GM10248 (cell line): ENCODE measurements at regions of chr5 and their contacts with region 1.

Region 1: GRCh38 chr5:157948738-157949410 is 89.9 kb upstream of the CLINT1 start:
- DNase-seq: peak; percentile 77
- CTCF ChIP-seq: peak; percentile 95

Region 2: DNA sequence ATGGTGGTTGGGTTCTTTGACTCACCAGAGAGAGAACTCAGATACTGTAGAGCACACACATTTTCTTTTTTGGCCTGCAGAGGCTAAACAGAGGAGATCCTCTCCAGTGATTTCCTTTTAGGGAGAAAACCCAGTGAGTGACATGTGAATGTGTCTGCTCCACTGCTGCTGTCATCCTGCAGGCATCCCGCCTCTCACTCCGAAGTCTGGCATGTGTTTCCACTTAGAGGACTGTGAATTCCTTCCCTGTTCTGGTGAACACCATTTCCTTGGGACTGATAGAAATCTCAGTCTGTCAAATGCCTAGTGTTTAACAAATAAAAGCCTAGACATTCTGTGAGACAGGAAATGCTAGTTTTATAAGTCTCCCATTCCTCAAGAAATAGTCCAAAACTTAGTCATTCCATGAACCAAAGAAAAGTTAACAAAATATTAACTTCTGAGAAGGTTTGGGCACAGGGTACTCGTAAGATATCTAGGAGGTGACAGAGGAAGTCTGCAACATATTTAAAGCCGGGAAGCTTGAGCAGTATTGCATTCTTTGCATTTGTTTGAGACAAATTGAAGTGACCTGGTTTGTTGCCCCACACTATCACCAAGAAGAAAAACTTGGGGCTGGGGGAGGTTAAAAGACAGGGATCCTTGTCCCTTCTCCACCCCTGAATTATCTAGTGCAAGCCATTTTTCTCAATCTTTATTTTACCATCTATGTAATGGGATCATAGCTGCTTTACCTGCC is 563.7 kb before region 1 on chr5:
- CTCF ChIA-PET with region 1: no interaction called
- POLR2A ChIA-PET with region 1: no interaction called
- DNase-seq: no peak
- CTCF ChIP-seq: no peak

Region 3: GRCh38 chr5:157761690-157762621 is 186.9 kb before region 1 on chr5:
- CTCF ChIA-PET with region 1: interaction called, 49 read pairs
- POLR2A ChIA-PET with region 1: no interaction called
- DNase-seq: peak; percentile 66
- CTCF ChIP-seq: peak; percentile 75

Region 4: DNA sequence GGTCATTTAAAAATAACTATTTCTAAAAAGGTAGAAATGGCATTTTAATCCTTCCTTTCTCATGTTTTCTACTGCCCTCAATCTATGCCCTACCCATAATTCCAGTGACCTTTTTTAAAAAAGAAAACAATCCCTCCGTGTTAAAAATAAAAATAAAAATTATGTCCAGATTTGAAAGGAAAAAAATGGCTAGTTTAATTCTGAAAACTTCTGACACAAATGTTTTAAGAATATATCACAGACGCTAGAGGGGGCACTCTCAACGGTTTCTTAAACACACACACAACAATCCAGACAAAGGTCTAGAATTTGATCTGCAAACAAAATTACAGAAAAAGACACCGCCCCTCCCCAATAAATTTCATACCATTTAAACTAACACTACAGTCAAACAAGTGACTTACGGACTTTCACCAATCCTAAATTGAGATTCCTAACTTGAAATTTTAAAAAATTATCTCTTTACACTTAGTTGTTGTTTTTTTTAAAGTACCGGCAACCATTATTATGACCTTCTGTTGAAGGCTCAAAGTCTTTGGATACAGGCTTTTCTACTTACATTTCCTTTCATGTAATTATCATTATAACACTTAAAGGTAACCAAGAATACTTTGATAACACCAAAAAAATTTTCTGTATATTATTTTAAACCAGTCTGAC is 128.2 kb before region 1 on chr5:
- CTCF ChIA-PET with region 1: interaction called, 91 read pairs
- POLR2A ChIA-PET with region 1: no interaction called
- DNase-seq: peak; percentile 26
- CTCF ChIP-seq: peak; percentile 57

Region 5: GRCh38 chr5:157858527-157859226 is 90.2 kb before region 1 on chr5 and contains the start of gene CLINT1:
- CTCF ChIA-PET with region 1: interaction called, 19 read pairs
- POLR2A ChIA-PET with region 1: no interaction called
- DNase-seq: peak; percentile 88
- CTCF ChIP-seq: peak; percentile 9

Region 6: DNA sequence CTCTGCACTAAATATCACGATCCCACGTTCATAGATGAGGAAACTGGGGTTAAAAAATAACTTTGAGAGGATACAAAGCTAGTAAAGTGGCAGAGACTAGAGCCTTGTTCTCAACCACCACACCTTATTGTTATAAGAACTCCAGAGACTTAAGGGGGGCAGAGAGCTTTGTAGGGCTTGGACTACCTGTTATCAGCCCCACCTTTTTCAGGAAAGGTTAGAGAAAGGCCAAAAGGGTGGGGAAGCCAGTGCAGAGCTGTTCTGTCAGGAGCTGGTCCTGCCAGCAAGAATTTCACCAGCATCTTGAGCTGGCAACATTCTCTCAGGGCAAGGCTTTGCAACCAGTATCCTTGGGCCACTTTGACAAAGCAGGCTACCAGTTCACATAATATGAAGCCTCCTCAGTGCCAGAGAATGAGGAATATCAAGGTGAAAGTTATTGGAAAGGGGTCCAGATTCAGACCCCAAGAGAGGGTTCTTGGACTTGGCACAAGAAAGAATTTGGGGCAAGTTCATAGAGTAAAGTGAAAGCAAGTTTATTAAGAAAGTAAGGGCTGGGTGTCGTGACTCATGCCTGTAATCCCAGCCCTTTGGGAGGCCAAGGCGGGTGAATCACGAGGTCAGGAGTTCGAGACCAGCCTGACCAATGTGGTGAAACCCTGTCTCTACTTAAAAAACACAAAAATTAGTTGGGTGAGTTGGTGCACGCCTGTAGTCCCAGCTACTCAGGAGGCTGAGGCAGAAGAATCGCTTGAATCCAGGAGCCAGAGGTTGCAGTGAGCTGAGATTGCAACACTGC is 23.7 kb before region 1 on chr5:
- CTCF ChIA-PET with region 1: interaction called, 67 read pairs
- POLR2A ChIA-PET with region 1: no interaction called
- DNase-seq: no peak
- CTCF ChIP-seq: no peak

Region 7: GRCh38 chr5:157965040-157965678 is 16.3 kb after region 1 on chr5:
- CTCF ChIA-PET with region 1: interaction called, 57 read pairs
- POLR2A ChIA-PET with region 1: no interaction called
- DNase-seq: no peak
- CTCF ChIP-seq: no peak

Region 8: GRCh38 chr5:157994906-157995519 is 46.1 kb after region 1 on chr5:
- CTCF ChIA-PET with region 1: interaction called, 14 read pairs
- POLR2A ChIA-PET with region 1: no interaction called
- DNase-seq: peak; percentile 63
- CTCF ChIP-seq: peak; percentile 52